ENCODE measurements at regions of chr18 and their contacts with region 1.

Region 1: GRCh38 chr18:13791181-13791580 is 32.8 kb upstream of the MC5R start:
- DNase-seq: peak in 1 of 2 experiments; percentile 35
- H3K4me3 ChIP-seq: no peak overlapping the region
- H3K27ac ChIP-seq: no peak overlapping the region
- H3K4me1 ChIP-seq: no peaks in the 10 kb centered on the region
- H3K27me3 ChIP-seq: no peaks in the 10 kb centered on the region
- CTCF ChIP-seq: no peak

Region 2: DNA sequence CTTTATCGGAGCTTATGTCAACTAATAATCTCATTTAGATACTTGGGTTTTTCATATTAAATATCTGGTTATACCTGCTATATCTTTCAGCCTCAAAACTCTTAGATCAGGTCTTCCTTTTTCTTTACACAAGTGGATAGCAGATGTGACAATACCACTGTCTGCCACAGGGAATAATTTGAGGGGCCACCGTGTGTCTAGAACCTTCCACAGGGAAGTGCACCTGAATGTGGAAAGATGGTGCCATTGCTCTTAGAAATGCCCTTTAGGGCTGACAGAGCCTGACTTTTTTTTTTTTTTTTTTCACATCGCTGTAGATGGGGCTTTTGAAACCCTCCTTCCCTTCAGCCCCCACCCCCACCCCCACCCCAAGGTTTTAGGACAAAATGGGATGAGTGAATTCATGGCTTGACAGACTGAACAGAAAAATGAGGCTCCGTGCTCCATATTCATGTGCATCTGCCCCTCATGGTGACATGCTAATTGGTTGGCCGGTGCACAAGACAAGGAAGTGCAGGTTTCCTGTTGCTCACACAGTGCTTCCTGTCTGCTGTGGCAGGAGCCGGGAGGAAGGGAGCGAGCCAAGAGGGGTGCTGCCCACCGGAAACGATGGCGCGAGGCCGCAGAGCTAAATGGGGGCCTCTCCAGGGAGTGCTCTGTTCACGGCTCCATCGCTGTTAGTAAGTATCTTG is 326.6 kb before region 1 on chr18:
- CTCF ChIA-PET with region 1: no interaction called
- POLR2A ChIA-PET with region 1: no interaction called
- intact Hi-C with region 1: no loop called
- DNase-seq: no peak
- H3K4me3 ChIP-seq: no peak overlapping the region
- H3K27ac ChIP-seq: no peak overlapping the region
- H3K4me1 ChIP-seq: no peaks in the 10 kb centered on the region
- H3K27me3 ChIP-seq: peaks cover 60% of the 10 kb centered on the region
- CTCF ChIP-seq: no peak

Region 3: GRCh38 chr18:13611601-13612195 is 179.5 kb before region 1 on chr18:
- CTCF ChIA-PET with region 1: no interaction called
- POLR2A ChIA-PET with region 1: no interaction called
- intact Hi-C with region 1: no loop called
- DNase-seq: no peak
- H3K4me3 ChIP-seq: no peak overlapping the region
- H3K27ac ChIP-seq: no peak overlapping the region
- H3K4me1 ChIP-seq: no peaks in the 10 kb centered on the region
- H3K27me3 ChIP-seq: peaks cover 60% of the 10 kb centered on the region
- CTCF ChIP-seq: no peak

Region 4: GRCh38 chr18:13726232-13726971 is 64.8 kb before region 1 on chr18 and contains the starts of genes FAM210A and RNMT:
- CTCF ChIA-PET with region 1: no interaction called
- POLR2A ChIA-PET with region 1: no interaction called
- intact Hi-C with region 1: no loop called
- DNase-seq: peak; percentile 87 to 94
- H3K4me3 ChIP-seq: peak within 1 kb of the TSS; percentile 97
- H3K27ac ChIP-seq: peak within 1 kb of the TSS; percentile 82
- H3K4me1 ChIP-seq: peaks cover 19% of the 10 kb centered on the region
- H3K27me3 ChIP-seq: no peaks in the 10 kb centered on the region
- CTCF ChIP-seq: no peak
- total RNA-seq, gene FAM210A: 27.3 and 29.3 TPM in 2 replicates
- total RNA-seq, gene RNMT: 32.0 and 48.8 TPM in 2 replicates

Region 5: GRCh38 chr18:13813271-13813849 is 22.2 kb after region 1 on chr18:
- CTCF ChIA-PET with region 1: interaction called, 11 read pairs
- POLR2A ChIA-PET with region 1: no interaction called
- intact Hi-C with region 1: no loop called
- DNase-seq: peak; percentile 47 to 67
- H3K4me3 ChIP-seq: no peak overlapping the region
- H3K27ac ChIP-seq: no peak overlapping the region
- H3K4me1 ChIP-seq: peaks cover 19% of the 10 kb centered on the region
- H3K27me3 ChIP-seq: peaks cover 8% of the 10 kb centered on the region; the same call in 1 of the 2 replicates
- CTCF ChIP-seq: peak; percentile 88